ENCODE measurements at regions of chr2 and their contacts with region 1.

Region 1: DNA sequence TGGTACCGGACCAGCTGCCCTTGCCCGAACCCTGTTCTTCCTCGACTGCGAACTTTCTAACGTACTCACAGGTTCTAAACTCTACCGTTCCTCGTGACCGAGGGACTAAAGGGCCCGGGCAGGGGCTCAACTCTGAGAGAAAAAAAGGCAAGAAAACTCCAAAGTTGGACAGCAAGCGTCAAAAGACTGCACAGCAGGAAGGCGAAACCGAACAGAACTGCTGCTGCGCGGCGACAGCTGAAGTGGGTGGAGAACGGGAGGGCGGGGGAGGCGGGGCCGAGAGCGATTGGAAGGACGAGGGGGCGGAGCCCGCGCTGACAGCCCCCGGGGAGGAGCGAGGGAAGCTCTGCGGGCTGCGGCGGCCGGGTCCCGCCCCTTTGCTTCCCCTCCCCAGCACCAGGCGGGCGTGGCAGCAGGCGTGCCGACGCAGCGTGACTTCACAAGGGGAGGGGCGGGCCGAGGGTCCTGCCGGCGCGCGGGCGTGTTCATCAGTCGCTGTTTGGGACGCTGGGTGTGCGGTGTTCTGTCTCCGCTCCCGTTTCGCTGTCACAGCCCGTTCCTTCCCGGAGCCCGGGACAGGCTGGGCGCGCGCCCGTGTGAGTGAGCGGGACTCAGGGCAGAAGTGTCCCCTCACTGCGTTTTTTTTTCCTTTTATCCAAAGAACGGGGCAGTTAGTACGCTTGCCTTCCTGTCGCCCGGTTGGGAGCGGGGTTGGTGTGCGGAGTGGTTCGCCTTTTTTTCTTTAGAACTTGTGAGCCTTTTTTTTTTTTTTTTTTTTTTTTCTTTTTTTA is at the start of gene NABP1:
- DNase-seq: peak; percentile 98 to 99 (median 98)
- ATAC-seq: peak; percentile 95
- H3K4me3 ChIP-seq: peak within 1 kb of the TSS; percentile 90
- H3K4me3 Mint-ChIP-seq: peak within 1 kb of the TSS; percentile 87 to 99 (median 96)
- H3K27ac ChIP-seq: peak within 1 kb of the TSS; percentile 92
- H3K27ac Mint-ChIP-seq: peak within 1 kb of the TSS; percentile 97 to 100 (median 99)
- H3K4me1 ChIP-seq: peaks cover 49 to 51% of the 10 kb centered on the region in 2 donors
- H3K4me1 Mint-ChIP-seq: peaks cover 30 to 74% (median 63%) of the 10 kb centered on the region in 7 donors
- H3K27me3 ChIP-seq: no peaks in the 10 kb centered on the region
- H3K27me3 Mint-ChIP-seq: peaks cover 0 to 2% (median 0%) of the 10 kb centered on the region in 5 donors
- total RNA-seq, gene NABP1: 24.5 to 79.5 (median 55.4) TPM

Region 2: DNA sequence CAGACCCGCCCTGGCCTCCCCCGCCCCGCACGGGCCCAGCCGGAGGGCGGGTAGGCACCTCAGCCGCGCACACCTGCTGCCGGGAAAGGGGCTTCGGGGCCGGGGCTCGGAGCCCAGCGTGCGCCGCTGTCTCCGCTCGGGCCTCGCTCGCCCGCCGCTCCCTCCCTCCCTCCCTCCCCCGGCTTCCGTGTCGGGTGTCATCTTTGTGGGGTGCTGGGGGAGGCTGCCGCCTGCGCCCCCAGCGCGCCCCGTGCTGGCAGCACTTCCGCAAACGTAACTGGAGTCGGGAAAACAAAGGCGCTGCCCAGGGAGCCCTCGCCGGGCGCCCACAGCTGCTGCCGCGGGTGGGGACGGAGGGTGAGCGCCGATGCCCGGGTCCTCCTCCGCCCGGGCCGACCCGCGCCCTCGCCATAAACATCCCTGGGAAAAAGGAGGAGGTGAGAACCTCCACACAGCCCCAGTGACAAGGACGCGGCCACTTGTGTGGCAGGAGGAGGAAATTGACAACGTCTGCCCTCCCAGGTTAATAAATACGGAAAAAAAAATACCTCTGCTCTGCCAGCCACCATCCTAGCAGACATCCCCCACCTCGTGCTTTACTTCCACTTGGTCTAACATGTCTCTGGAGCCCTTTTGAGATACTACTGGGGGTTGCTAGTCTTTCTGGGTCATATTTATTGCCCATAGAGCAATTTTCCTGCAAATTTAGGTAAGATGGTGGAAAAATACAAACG is 1269.1 kb before region 1 on chr2:
- CTCF ChIA-PET with region 1: no interaction called
- POLR2A ChIA-PET with region 1: interaction called, 6 read pairs
- intact Hi-C with region 1: loop called in 1 of 2 experiments (anchors 5 kb)
- DNase-seq: peak in 8 of 9 donors; percentile 69 to 86 (median 82)
- ATAC-seq: peak; percentile 68
- H3K4me3 ChIP-seq: peak overlapping the region; percentile 76
- H3K4me3 Mint-ChIP-seq: peak overlapping the region; percentile 87 to 95 (median 92)
- H3K27ac ChIP-seq: peak overlapping the region; percentile 100
- H3K27ac Mint-ChIP-seq: peak overlapping the region; percentile 94 to 98 (median 98)
- H3K4me1 ChIP-seq: peaks cover 28 to 41% of the 10 kb centered on the region in 2 donors
- H3K4me1 Mint-ChIP-seq: peaks cover 29 to 52% (median 45%) of the 10 kb centered on the region in 7 donors
- H3K27me3 ChIP-seq: no peaks in the 10 kb centered on the region
- H3K27me3 Mint-ChIP-seq: no peaks in the 10 kb centered on the region

Region 3: DNA sequence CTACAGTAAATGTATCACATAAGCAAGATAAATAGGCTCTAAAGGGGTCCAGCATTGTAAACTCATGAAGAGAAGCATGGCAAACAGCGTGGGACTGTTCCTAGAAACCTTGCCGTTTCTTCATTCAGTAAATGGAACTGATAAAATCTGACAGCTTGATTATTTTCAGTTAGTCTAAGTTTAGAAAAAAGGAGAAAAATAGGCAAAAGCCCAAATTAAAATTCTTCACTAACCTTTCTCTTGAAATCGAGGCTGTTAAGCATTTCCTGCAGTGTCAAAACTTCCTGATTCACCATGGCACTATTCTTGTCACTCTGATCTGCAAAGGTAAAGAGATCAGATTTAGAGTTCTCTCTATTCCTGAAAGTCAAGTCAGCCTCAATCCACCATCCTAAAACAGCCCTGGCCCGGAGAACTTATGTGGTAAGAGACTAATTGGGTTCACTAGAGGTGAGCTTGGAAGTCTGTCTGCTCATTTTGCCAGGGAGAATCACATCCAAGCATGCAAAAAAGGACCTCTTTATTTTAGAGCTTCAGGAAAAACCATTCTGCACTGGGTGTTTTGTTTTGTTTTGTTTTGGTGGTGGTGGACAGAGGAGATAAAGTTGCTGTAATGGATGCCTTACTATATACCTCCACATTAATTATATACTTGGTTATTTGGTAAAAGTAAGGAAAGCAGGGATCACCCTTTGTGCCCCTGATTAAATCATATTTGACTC is 611.5 kb before region 1 on chr2:
- CTCF ChIA-PET with region 1: no interaction called
- POLR2A ChIA-PET with region 1: no interaction called
- intact Hi-C with region 1: loop called (anchors 5 kb)
- DNase-seq: peak in 2 of 9 donors; percentile 20 to 26
- ATAC-seq: peak; percentile 46
- H3K4me3 ChIP-seq: no peak overlapping the region
- H3K4me3 Mint-ChIP-seq: peak overlapping the region; percentile 42 to 87 (median 67)
- H3K27ac ChIP-seq: peak overlapping the region; percentile 60
- H3K27ac Mint-ChIP-seq: peak overlapping the region; percentile 51 to 95 (median 89)
- H3K4me1 ChIP-seq: peaks cover 53 to 67% of the 10 kb centered on the region in 2 donors
- H3K4me1 Mint-ChIP-seq: peaks cover 51 to 93% (median 88%) of the 10 kb centered on the region in 7 donors
- H3K27me3 ChIP-seq: no peaks in the 10 kb centered on the region
- H3K27me3 Mint-ChIP-seq: no peaks in the 10 kb centered on the region

Region 4: DNA sequence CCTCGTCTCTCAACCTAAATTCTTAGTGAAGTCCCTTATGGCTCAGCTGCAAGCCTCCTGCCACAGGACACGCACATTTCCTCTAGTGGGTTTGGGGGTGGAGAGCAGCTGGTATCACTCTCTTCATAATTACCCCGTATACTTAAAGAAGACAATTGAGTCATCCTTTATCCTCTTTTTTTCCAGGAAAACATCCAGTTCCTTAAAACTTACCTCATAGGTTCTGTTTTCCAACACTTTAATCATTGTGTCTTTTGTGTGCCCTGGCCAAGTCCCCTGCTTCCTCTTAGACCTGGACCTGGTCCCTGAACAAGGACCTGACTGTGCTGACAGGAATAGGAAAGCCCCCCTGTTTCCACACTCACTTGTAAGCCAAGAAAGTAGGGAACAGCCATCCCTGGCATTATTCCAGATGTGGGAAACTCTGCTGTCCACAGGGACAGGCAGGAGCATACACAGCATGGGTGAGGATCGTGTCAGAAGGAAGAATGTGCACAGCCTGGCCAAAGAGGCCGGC is 474.9 kb before region 1 on chr2:
- CTCF ChIA-PET with region 1: no interaction called
- POLR2A ChIA-PET with region 1: no interaction called
- intact Hi-C with region 1: loop called in 1 of 2 experiments (anchors 5 kb)
- DNase-seq: no peak
- ATAC-seq: no peak
- H3K4me3 ChIP-seq: no peak overlapping the region
- H3K4me3 Mint-ChIP-seq: peak overlapping the region in 7 of 10 donors; percentile 6 to 62 (median 13)
- H3K27ac ChIP-seq: no peak overlapping the region
- H3K27ac Mint-ChIP-seq: peak overlapping the region in 5 of 9 donors; percentile 13 to 79 (median 37)
- H3K4me1 ChIP-seq: peaks cover 22 to 33% of the 10 kb centered on the region in 2 donors
- H3K4me1 Mint-ChIP-seq: peaks cover 25 to 54% (median 44%) of the 10 kb centered on the region in 7 donors
- H3K27me3 ChIP-seq: no peaks in the 10 kb centered on the region
- H3K27me3 Mint-ChIP-seq: no peaks in the 10 kb centered on the region

Region 5: GRCh38 chr2:191625016-191625415 is 52.8 kb before region 1 on chr2:
- CTCF ChIA-PET with region 1: interaction called, 8 read pairs
- POLR2A ChIA-PET with region 1: interaction called, 173 read pairs
- intact Hi-C with region 1: loop called in 1 of 2 experiments (anchors 1 kb)
- DNase-seq: peak in 6 of 9 donors; percentile 26 to 68 (median 64)
- ATAC-seq: peak; percentile 90
- H3K4me3 ChIP-seq: no peak overlapping the region
- H3K4me3 Mint-ChIP-seq: peak overlapping the region in 7 of 10 donors; percentile 7 to 52 (median 42)
- H3K27ac ChIP-seq: no peak overlapping the region
- H3K27ac Mint-ChIP-seq: peak overlapping the region in 8 of 9 donors; percentile 65 to 90 (median 82)
- H3K4me1 ChIP-seq: peaks cover 18 to 25% of the 10 kb centered on the region in 2 donors
- H3K4me1 Mint-ChIP-seq: peaks cover 32 to 77% (median 59%) of the 10 kb centered on the region in 7 donors
- H3K27me3 ChIP-seq: no peaks in the 10 kb centered on the region
- H3K27me3 Mint-ChIP-seq: peaks cover 0 to 2% (median 0%) of the 10 kb centered on the region in 5 donors

Region 6: DNA sequence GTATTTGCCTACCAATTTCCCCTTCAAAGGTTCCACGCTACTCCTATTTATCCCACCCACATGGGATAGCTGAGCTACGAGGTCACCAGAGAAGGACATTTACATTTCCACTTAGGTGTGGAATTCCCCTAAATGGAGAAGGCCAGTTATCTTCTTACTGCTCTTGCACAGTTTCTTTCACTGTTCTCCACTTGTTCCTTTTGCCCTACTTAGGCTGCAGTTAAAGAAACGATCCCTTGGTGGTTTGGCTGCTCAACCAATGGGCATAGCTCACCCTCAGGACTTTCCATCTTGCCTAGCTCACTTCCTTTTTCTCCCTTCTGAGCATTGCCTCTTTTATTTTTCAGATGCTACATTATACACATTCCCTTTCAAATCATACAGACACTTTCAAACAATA is 11.1 kb before region 1 on chr2:
- CTCF ChIA-PET with region 1: no interaction called
- POLR2A ChIA-PET with region 1: interaction called, 26 read pairs
- intact Hi-C with region 1: no loop called
- DNase-seq: no peak
- ATAC-seq: peak; percentile 63
- H3K4me3 ChIP-seq: no peak overlapping the region
- H3K4me3 Mint-ChIP-seq: peak overlapping the region in 1 of 10 donors; percentile 10
- H3K27ac ChIP-seq: no peak overlapping the region
- H3K27ac Mint-ChIP-seq: no peak overlapping the region
- H3K4me1 ChIP-seq: no peaks in the 10 kb centered on the region
- H3K4me1 Mint-ChIP-seq: peaks cover 0 to 19% (median 3%) of the 10 kb centered on the region in 7 donors
- H3K27me3 ChIP-seq: no peaks in the 10 kb centered on the region
- H3K27me3 Mint-ChIP-seq: no peaks in the 10 kb centered on the region

Region 7: DNA sequence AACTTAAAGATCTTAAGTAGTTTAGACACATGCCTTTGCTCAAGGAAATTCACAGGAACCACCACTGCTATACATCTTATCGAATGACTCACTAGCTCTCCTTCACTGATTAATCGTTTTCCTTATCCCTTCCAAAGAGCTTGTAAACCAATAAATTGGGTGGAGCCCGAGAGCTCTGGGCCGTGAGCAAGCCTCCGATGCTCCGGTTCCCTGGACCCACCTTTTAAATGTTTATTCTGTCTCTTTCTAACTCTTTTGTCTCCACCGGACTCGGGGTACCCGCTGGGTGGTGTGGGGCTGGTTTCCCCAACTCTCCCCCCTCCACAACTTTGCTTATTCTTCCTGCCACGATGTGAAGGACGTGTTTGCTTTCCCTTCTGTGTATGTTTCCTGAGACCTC is 809.8 kb after region 1 on chr2:
- CTCF ChIA-PET with region 1: no interaction called
- POLR2A ChIA-PET with region 1: no interaction called
- intact Hi-C with region 1: no loop called
- DNase-seq: no peak
- ATAC-seq: no peak
- H3K4me3 ChIP-seq: no peak overlapping the region
- H3K4me3 Mint-ChIP-seq: no peak overlapping the region
- H3K27ac ChIP-seq: no peak overlapping the region
- H3K27ac Mint-ChIP-seq: no peak overlapping the region
- H3K4me1 ChIP-seq: no peaks in the 10 kb centered on the region
- H3K4me1 Mint-ChIP-seq: no peaks in the 10 kb centered on the region
- H3K27me3 ChIP-seq: peaks cover 0 to 3% of the 10 kb centered on the region in 2 donors
- H3K27me3 Mint-ChIP-seq: peaks cover 0 to 4% (median 0%) of the 10 kb centered on the region in 5 donors